T-cell (primary cell): ENCODE measurements at regions of chrX and their contacts with region 1.

Region 1: DNA sequence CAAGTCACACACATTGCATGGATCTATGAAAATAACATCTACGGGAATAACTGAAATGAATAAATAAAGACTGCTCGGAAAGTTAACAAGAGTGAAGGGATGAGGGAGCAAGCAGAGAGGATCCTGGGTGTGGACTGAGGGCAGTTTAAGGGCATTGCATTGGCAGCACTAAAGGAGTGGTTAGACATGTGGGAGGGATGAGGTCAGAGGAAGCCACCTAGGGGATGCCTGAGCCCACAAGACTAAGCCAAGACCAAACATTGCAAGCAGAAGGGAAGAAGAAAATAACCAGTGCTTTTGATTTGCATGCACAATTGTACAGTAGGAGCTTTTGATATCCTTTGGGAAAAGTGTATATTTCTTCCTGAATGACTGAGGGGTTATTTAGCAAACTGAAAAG is 106.1 kb downstream of the MSL3 start:
- DNase-seq: no peak
- ATAC-seq: no peak
- H3K4me3 ChIP-seq: no peak overlapping the region
- H3K4me3 Mint-ChIP-seq: no peak overlapping the region
- H3K27ac ChIP-seq: no peak overlapping the region
- H3K27ac Mint-ChIP-seq: no peak overlapping the region
- H3K4me1 ChIP-seq: no peaks in the 10 kb centered on the region
- H3K4me1 Mint-ChIP-seq: no peaks in the 10 kb centered on the region
- H3K27me3 ChIP-seq: no peaks in the 10 kb centered on the region
- H3K27me3 Mint-ChIP-seq: peaks cover 0 to 5% of the 10 kb centered on the region in 2 donors

Region 2: DNA sequence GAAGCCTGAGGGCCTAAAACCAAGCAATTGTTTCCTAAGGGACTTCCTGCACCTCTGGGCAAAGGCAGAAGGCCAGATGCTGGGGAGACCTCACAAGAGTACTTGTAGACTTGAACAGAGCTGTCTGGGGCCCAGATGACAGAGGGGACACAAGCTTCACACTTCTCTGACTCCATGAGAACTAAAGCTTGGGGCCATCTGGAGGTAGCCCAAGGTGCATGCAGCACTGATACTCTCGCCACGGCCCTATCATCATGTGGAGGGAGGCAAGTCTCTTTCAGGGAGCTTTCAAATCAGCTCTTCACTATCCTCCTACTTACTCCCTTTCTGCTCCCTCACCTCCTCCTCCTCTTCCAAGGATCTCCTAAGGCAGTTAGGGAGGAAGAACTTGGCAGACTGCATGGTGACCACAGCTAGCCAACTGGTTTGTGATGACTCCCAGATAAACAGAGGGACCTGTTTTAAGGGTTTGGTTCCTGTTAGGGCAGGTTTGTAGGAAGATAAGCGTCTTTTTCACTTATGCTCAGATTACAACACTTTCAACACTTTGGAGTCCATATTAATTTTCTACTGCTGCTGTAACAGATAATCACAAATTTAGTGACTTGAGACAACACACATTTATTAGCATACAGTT is 82.3 kb before region 1 on chrX:
- CTCF ChIA-PET with region 1: interaction called in 1 of 2 experiments, 11 read pairs
- POLR2A ChIA-PET with region 1: no interaction called
- DNase-seq: no peak
- ATAC-seq: no peak
- H3K4me3 ChIP-seq: no peak overlapping the region
- H3K4me3 Mint-ChIP-seq: no peak overlapping the region
- H3K27ac ChIP-seq: no peak overlapping the region
- H3K27ac Mint-ChIP-seq: no peak overlapping the region
- H3K4me1 ChIP-seq: no peaks in the 10 kb centered on the region
- H3K4me1 Mint-ChIP-seq: peaks cover 4 to 7% (median 6%) of the 10 kb centered on the region in 3 donors
- H3K27me3 ChIP-seq: no peaks in the 10 kb centered on the region
- H3K27me3 Mint-ChIP-seq: no peaks in the 10 kb centered on the region